B cell (primary cell): ENCODE measurements at regions of chr7 and their contacts with region 1.

Region 1: GRCh38 chr7:108452722-108453121 is 3.5 kb downstream of the NRCAM start:
- DNase-seq: peak; percentile 54
- ATAC-seq: peak; percentile 62
- H3K4me3 ChIP-seq: no peak overlapping the region
- H3K4me3 Mint-ChIP-seq: peak overlapping the region; percentile 12
- H3K27ac ChIP-seq: no peak overlapping the region
- H3K27ac Mint-ChIP-seq: no peak overlapping the region
- H3K4me1 ChIP-seq: peaks cover 20 to 30% of the 10 kb centered on the region in 2 donors
- H3K4me1 Mint-ChIP-seq: peaks cover 31% of the 10 kb centered on the region
- H3K27me3 ChIP-seq: peaks cover 0 to 38% (median 29%) of the 10 kb centered on the region in 4 experiments
- H3K27me3 Mint-ChIP-seq: peaks cover 32% of the 10 kb centered on the region
- CTCF ChIP-seq: peak; percentile 82

Region 2: GRCh38 chr7:108045154-108045553 is 407.6 kb before region 1 on chr7:
- CTCF ChIA-PET with region 1: no interaction called
- POLR2A ChIA-PET with region 1: no interaction called
- intact Hi-C with region 1: no loop called
- DNase-seq: no peak
- ATAC-seq: no peak
- H3K4me3 ChIP-seq: no peak overlapping the region
- H3K4me3 Mint-ChIP-seq: no peak overlapping the region
- H3K27ac ChIP-seq: no peak overlapping the region
- H3K27ac Mint-ChIP-seq: no peak overlapping the region
- H3K4me1 ChIP-seq: peaks cover 10 to 11% of the 10 kb centered on the region in 2 donors
- H3K4me1 Mint-ChIP-seq: peaks cover 3% of the 10 kb centered on the region
- H3K27me3 ChIP-seq: no peaks in the 10 kb centered on the region
- H3K27me3 Mint-ChIP-seq: peaks cover 4% of the 10 kb centered on the region
- CTCF ChIP-seq: no peak

Region 3: DNA sequence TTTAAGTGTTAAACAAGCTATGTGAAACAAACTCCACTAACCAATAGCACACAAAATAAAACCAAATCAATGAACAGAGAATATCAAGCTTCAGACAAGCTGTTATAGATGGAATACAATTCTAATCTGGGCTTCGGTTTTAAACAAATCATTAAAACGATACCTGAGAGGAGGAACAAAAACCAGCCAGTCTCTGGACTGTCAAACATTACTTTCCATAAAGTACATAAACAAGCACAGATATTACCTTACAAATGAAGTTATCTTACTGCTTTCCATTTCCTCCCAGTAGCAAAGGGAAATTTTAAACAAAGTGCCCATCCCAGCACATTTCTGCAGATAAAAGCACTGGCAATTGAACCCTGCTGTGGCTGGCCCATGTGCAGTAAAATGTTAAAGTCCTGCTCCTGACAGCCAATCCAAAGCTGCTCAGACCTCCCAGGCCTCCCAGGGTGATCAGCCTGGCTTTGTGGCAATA is 124.5 kb before region 1 on chr7:
- CTCF ChIA-PET with region 1: no interaction called
- POLR2A ChIA-PET with region 1: no interaction called
- intact Hi-C with region 1: loop called (anchors 5 kb)
- DNase-seq: peak; percentile 3
- ATAC-seq: peak; percentile 76
- H3K4me3 ChIP-seq: peak overlapping the region in 2 of 5 experiments; percentile 16 to 18
- H3K4me3 Mint-ChIP-seq: peak overlapping the region; percentile 78
- H3K27ac ChIP-seq: peak overlapping the region; percentile 55 to 59
- H3K27ac Mint-ChIP-seq: peak overlapping the region; percentile 87
- H3K4me1 ChIP-seq: peaks cover 0 to 8% of the 10 kb centered on the region in 2 donors
- H3K4me1 Mint-ChIP-seq: peaks cover 32% of the 10 kb centered on the region
- H3K27me3 ChIP-seq: no peaks in the 10 kb centered on the region
- H3K27me3 Mint-ChIP-seq: no peaks in the 10 kb centered on the region
- CTCF ChIP-seq: no peak

Region 4: GRCh38 chr7:108358358-108358952 is 94.3 kb before region 1 on chr7:
- CTCF ChIA-PET with region 1: no interaction called
- POLR2A ChIA-PET with region 1: no interaction called
- intact Hi-C with region 1: no loop called
- DNase-seq: no peak
- ATAC-seq: no peak
- H3K4me3 ChIP-seq: no peak overlapping the region
- H3K4me3 Mint-ChIP-seq: no peak overlapping the region
- H3K27ac ChIP-seq: no peak overlapping the region
- H3K27ac Mint-ChIP-seq: peak overlapping the region; percentile 27
- H3K4me1 ChIP-seq: peaks cover 0 to 19% of the 10 kb centered on the region in 2 donors
- H3K4me1 Mint-ChIP-seq: peaks cover 21% of the 10 kb centered on the region
- H3K27me3 ChIP-seq: peaks cover 0 to 2% (median 0%) of the 10 kb centered on the region in 4 experiments
- H3K27me3 Mint-ChIP-seq: peaks cover 6% of the 10 kb centered on the region
- CTCF ChIP-seq: no peak

Region 5: GRCh38 chr7:108415821-108416536 is 36.7 kb before region 1 on chr7:
- CTCF ChIA-PET with region 1: interaction called, 7 read pairs
- POLR2A ChIA-PET with region 1: no interaction called
- intact Hi-C with region 1: loop called (anchors 2 kb)
- DNase-seq: peak; percentile 77
- ATAC-seq: peak; percentile 73
- H3K4me3 ChIP-seq: peak overlapping the region in 3 of 5 experiments; percentile 12 to 47 (median 27)
- H3K4me3 Mint-ChIP-seq: peak overlapping the region; percentile 81
- H3K27ac ChIP-seq: peak overlapping the region; percentile 57 to 73
- H3K27ac Mint-ChIP-seq: peak overlapping the region; percentile 85
- H3K4me1 ChIP-seq: peaks cover 43 to 56% of the 10 kb centered on the region in 2 donors
- H3K4me1 Mint-ChIP-seq: peaks cover 54% of the 10 kb centered on the region
- H3K27me3 ChIP-seq: peaks cover 0 to 27% (median 11%) of the 10 kb centered on the region in 4 experiments
- H3K27me3 Mint-ChIP-seq: peaks cover 6% of the 10 kb centered on the region
- CTCF ChIP-seq: no peak

Region 6: DNA sequence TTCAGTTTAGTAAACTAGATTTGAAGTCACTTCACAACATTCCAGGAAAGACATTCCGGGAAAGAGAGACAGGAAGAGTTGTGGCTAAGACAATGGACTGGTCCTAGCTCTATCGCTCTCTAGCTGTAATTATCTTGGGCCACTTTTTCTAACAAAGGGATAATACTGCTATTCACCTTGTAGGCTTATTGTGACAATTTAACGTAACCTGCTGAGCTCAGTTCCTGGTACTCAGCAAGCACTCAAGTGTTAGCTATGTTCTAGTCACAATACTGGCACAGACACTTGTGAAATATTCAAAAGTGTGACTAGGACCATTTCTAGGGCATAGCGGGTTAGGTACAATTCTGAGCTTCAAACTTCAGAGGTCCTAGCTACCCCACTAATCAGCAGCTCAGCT is 15.5 kb after region 1 on chr7:
- CTCF ChIA-PET with region 1: interaction called, 48 read pairs
- POLR2A ChIA-PET with region 1: interaction called, 4 read pairs
- intact Hi-C with region 1: loop called (anchors 2 kb)
- DNase-seq: no peak
- ATAC-seq: no peak
- H3K4me3 ChIP-seq: no peak overlapping the region
- H3K4me3 Mint-ChIP-seq: peak overlapping the region; percentile 71
- H3K27ac ChIP-seq: no peak overlapping the region
- H3K27ac Mint-ChIP-seq: no peak overlapping the region
- H3K4me1 ChIP-seq: peaks cover 9 to 11% of the 10 kb centered on the region in 2 donors
- H3K4me1 Mint-ChIP-seq: peaks cover 9% of the 10 kb centered on the region
- H3K27me3 ChIP-seq: peaks cover 0 to 15% (median 7%) of the 10 kb centered on the region in 4 experiments
- H3K27me3 Mint-ChIP-seq: peaks cover 24% of the 10 kb centered on the region
- CTCF ChIP-seq: no peak

Region 7: GRCh38 chr7:108497082-108497725 is 44.5 kb after region 1 on chr7:
- CTCF ChIA-PET with region 1: interaction called, 58 read pairs
- POLR2A ChIA-PET with region 1: no interaction called
- intact Hi-C with region 1: loop called (anchors 1 kb)
- DNase-seq: peak; percentile 81
- ATAC-seq: peak; percentile 94
- H3K4me3 ChIP-seq: no peak overlapping the region
- H3K4me3 Mint-ChIP-seq: no peak overlapping the region
- H3K27ac ChIP-seq: no peak overlapping the region
- H3K27ac Mint-ChIP-seq: peak overlapping the region; percentile 34
- H3K4me1 ChIP-seq: peaks cover 16% of the 10 kb centered on the region in 2 donors
- H3K4me1 Mint-ChIP-seq: peaks cover 32% of the 10 kb centered on the region
- H3K27me3 ChIP-seq: no peaks in the 10 kb centered on the region
- H3K27me3 Mint-ChIP-seq: no peaks in the 10 kb centered on the region
- CTCF ChIP-seq: peak; percentile 97

Region 8: GRCh38 chr7:108569381-108570145 is 116.8 kb after region 1 on chr7 and contains the starts of genes DNAJB9 and THAP5:
- CTCF ChIA-PET with region 1: interaction called, 6 read pairs
- POLR2A ChIA-PET with region 1: no interaction called
- intact Hi-C with region 1: loop called (anchors 2 kb)
- DNase-seq: peak; percentile 100
- ATAC-seq: peak; percentile 87
- H3K4me3 ChIP-seq: peak within 1 kb of the TSS; percentile 79 to 92 (median 89)
- H3K4me3 Mint-ChIP-seq: peak within 1 kb of the TSS; percentile 96
- H3K27ac ChIP-seq: peak within 1 kb of the TSS; percentile 99 to 100
- H3K27ac Mint-ChIP-seq: peak within 1 kb of the TSS; percentile 98
- H3K4me1 ChIP-seq: peaks cover 16 to 39% of the 10 kb centered on the region in 2 donors
- H3K4me1 Mint-ChIP-seq: peaks cover 51% of the 10 kb centered on the region
- H3K27me3 ChIP-seq: no peaks in the 10 kb centered on the region
- H3K27me3 Mint-ChIP-seq: no peaks in the 10 kb centered on the region
- CTCF ChIP-seq: no peak
- total RNA-seq, gene DNAJB9: 19.5 and 21.1 TPM in 2 replicates
- total RNA-seq, gene THAP5: 48.8 and 49.0 TPM in 2 replicates

Region 9: DNA sequence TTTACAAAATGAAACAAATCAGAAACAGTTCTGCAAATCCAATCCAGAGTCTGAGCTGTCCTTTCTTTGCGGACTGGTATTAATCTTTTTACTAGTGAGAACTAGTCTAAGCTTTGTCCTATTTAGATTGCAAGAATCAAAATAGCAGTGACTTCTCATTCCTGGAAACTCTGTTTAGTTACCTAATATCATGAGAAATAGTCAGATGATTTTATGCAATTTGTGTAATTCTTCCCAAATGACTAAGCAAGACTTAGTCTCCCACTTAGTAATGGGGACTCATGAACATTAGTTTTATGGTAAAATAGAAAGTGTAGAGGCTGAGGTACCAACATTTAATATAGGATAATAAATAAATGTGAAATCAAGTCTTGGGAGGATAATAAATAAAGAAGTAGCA is 458.3 kb after region 1 on chr7:
- CTCF ChIA-PET with region 1: no interaction called
- POLR2A ChIA-PET with region 1: no interaction called
- intact Hi-C with region 1: no loop called
- DNase-seq: no peak
- ATAC-seq: no peak
- H3K4me3 ChIP-seq: no peak overlapping the region
- H3K4me3 Mint-ChIP-seq: no peak overlapping the region
- H3K27ac ChIP-seq: no peak overlapping the region
- H3K27ac Mint-ChIP-seq: no peak overlapping the region
- H3K4me1 ChIP-seq: no peaks in the 10 kb centered on the region
- H3K4me1 Mint-ChIP-seq: no peaks in the 10 kb centered on the region
- H3K27me3 ChIP-seq: no peaks in the 10 kb centered on the region
- H3K27me3 Mint-ChIP-seq: no peaks in the 10 kb centered on the region
- CTCF ChIP-seq: no peak